ENCODE measurements at regions of chr10 and their contacts with region 1.

Region 1: GRCh38 chr10:16986406-16987205 is 143.0 kb downstream of the CUBN start:
- DNase-seq: peak; percentile 88
- H3K4me3 ChIP-seq: no peak overlapping the region
- H3K27ac ChIP-seq: peak overlapping the region; percentile 96
- H3K4me1 ChIP-seq: peaks cover 27% of the 10 kb centered on the region
- H3K27me3 ChIP-seq: no peaks in the 10 kb centered on the region
- CTCF ChIP-seq: no peak
- POLR2A ChIP-seq: no peak

Region 2: GRCh38 chr10:16756561-16757222 is 229.9 kb before region 1 on chr10:
- CTCF ChIA-PET with region 1: no interaction called
- POLR2A ChIA-PET with region 1: no interaction called
- dilution Hi-C with region 1: no loop called
- intact Hi-C with region 1: no loop called
- DNase-seq: no peak
- H3K4me3 ChIP-seq: no peak overlapping the region
- H3K27ac ChIP-seq: no peak overlapping the region
- H3K4me1 ChIP-seq: no peaks in the 10 kb centered on the region
- H3K27me3 ChIP-seq: no peaks in the 10 kb centered on the region
- CTCF ChIP-seq: no peak
- POLR2A ChIP-seq: no peak

Region 3: DNA sequence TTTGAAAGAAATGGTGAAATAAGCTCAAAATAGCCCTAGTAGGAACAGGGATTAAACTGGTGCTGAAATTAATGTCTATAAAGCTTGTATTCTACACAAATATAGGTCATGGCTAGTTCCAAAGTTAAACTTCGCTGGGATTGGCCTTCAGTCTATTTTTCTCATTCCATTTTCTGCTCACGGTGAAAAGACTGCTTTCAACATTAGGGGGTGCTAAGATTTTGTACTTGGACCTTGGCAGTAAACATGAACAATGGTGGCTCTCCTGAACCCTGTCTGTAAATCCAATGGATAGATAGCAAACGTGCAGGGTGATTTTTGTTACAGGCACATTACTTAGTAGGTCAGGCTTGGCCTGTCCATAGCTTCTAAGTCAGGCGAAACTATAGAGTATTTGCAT is 133.4 kb before region 1 on chr10:
- CTCF ChIA-PET with region 1: interaction called, 6 read pairs
- POLR2A ChIA-PET with region 1: no interaction called
- dilution Hi-C with region 1: no loop called
- intact Hi-C with region 1: loop called (anchors 1 kb)
- DNase-seq: peak; percentile 73
- H3K4me3 ChIP-seq: no peak overlapping the region
- H3K27ac ChIP-seq: no peak overlapping the region
- H3K4me1 ChIP-seq: peaks cover 23% of the 10 kb centered on the region
- H3K27me3 ChIP-seq: no peaks in the 10 kb centered on the region
- CTCF ChIP-seq: peak; percentile 35 to 39
- POLR2A ChIP-seq: no peak

Region 4: DNA sequence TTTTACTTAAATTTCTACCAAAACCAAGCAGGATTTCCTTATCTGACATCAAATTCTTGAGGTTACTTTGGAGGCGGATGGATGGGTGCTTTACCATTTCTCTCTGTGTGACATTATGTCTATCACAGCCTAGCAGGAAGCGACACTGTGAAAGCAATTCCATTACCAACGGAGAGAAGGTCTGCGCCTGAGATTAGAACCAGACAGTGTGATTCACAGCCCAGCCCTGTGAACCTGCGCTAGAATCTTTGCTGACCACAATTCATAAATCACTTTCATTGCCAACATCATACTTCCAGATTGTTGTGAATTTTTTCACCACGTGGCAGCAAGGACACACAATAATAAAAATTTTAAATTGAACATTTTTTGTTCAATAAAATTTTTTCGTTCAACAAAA is 16.5 kb after region 1 on chr10:
- CTCF ChIA-PET with region 1: no interaction called
- POLR2A ChIA-PET with region 1: no interaction called
- dilution Hi-C with region 1: no loop called
- intact Hi-C with region 1: no loop called
- DNase-seq: peak; percentile 83
- H3K4me3 ChIP-seq: no peak overlapping the region
- H3K27ac ChIP-seq: peak overlapping the region; percentile 62
- H3K4me1 ChIP-seq: peaks cover 57% of the 10 kb centered on the region
- H3K27me3 ChIP-seq: no peaks in the 10 kb centered on the region
- CTCF ChIP-seq: no peak
- POLR2A ChIP-seq: no peak